ENCODE measurements at regions of chr1 and their contacts with region 1.

Region 1: GRCh38 chr1:240691521-240692338 is 79.8 kb upstream of the GREM2 start:
- DNase-seq: peak in 8 of 10 donors; percentile 28 to 62 (median 54)
- H3K4me3 ChIP-seq: peak overlapping the region in 14 of 59 donors; percentile 2 to 48 (median 20)
- H3K27ac ChIP-seq: no peak overlapping the region
- H3K27me3 ChIP-seq: no peaks in the 10 kb centered on the region
- CTCF ChIP-seq: peak in 54 of 56 donors; percentile 28 to 75 (median 58)

Region 2: GRCh38 chr1:240027059-240027462 is 664.7 kb before region 1 on chr1:
- intact Hi-C with region 1: loop called (anchors 10 kb)
- DNase-seq: peak in 9 of 10 donors; percentile 30 to 73 (median 53)
- H3K4me3 ChIP-seq: peak overlapping the region in 1 of 59 donors; percentile 1
- H3K27ac ChIP-seq: no peak overlapping the region
- H3K27me3 ChIP-seq: no peaks in the 10 kb centered on the region
- CTCF ChIP-seq: peak; percentile 64 to 99 (median 90)

Region 3: DNA sequence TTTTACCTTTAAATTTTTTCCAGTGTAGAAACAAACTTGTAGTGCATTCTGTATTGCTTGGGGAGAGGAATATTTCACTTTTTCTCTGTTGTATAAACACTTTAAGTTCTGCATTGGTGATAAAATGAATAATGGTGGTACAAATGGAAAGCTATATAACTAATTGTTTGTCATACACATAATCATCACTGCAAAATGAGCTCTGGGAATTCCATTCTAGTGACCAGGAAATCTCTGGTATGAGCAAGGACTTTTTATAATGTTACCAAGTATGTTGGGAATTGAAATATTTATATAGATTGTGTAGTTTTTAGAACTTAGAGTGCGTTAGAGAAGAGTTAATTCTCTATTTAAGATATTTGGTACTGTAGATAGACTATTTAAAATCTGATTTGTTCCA is 605.0 kb before region 1 on chr1:
- intact Hi-C with region 1: loop called in 1 of 2 experiments (anchors 10 kb)
- DNase-seq: no peak
- H3K4me3 ChIP-seq: no peak overlapping the region
- H3K27ac ChIP-seq: no peak overlapping the region
- H3K27me3 ChIP-seq: no peaks in the 10 kb centered on the region
- CTCF ChIP-seq: no peak